K562 (cell line): ENCODE measurements at regions of chr18 and their contacts with region 1.

Region 1: DNA sequence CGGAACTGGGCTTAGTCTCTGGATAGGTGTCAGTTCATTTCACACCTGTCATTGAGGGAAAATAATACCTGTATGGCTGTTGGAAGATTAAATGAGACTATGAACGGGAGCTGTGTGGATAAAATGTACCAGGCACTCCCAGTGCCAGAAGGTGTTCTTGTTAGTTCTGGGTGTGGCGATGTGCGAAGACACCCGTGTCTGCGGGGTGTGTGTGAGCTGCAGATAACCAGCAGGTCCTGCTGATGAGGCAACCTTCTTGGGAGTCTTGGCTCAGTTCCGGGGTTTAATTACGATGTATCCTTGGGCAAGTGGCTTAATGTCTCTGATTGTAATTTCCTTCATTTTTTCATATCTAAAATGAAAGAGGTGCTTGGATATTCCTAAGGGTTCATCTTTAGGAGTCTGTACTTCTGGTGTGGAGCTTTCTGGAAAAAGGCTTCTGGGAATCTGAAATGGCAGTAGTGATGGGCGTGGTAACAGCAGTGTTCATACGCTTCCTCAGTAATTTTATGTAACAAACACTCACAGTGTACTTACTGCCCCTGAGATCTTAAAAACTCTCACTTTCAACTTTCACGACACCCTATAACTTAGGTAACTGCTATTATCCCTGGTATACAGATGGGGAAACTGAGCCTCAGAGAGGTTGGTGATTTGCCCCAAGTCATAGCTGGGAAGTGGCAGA is 35.0 kb downstream of the NEDD4L start:
- DNase-seq: peak; percentile 77 to 86 (median 84)
- ATAC-seq: peak; percentile 93
- H3K4me3 ChIP-seq: no peak overlapping the region
- H3K27ac ChIP-seq: peak overlapping the region; percentile 71
- H3K4me1 ChIP-seq: peaks cover 10 to 21% of the 10 kb centered on the region in 2 experiments; a peak in 3 of 5 replicates
- H3K27me3 ChIP-seq: no peaks in the 10 kb centered on the region
- CTCF ChIP-seq: no peak
- EP300 ChIP-seq: peak; percentile 85
- POLR2A ChIP-seq: no peak
- RAD21 ChIP-seq: no peak

Region 2: DNA sequence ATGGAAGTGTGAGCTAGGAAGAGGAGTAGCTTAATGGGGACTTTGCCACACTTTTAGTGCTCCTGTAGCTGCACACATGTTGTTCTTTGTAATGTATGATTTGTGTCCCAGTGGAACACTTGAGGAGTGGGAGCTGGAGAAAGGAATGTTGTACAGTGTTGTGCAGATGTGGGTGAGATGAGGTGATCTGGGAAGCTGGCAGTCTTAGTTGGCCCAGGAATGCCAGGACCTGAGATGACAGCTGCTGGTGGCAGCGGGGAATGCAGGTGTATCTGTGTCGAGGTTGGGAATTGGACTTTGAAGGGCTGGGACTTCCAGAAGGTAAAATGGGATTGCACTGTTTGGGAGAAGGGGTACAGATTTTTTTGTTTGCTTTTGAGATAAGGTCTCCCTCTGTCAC is 11.4 kb before region 1 on chr18:
- CTCF ChIA-PET with region 1: interaction called, 5 read pairs
- POLR2A ChIA-PET with region 1: interaction called, 10 read pairs
- in situ Hi-C with region 1: no loop called
- intact Hi-C with region 1: no loop called
- DNase-seq: no peak
- ATAC-seq: no peak
- H3K4me3 ChIP-seq: no peak overlapping the region
- H3K27ac ChIP-seq: no peak overlapping the region
- H3K4me1 ChIP-seq: peaks cover 6 to 22% of the 10 kb centered on the region in 2 experiments; a peak in 4 of 5 replicates
- H3K27me3 ChIP-seq: no peaks in the 10 kb centered on the region
- CTCF ChIP-seq: no peak
- EP300 ChIP-seq: no peak
- POLR2A ChIP-seq: no peak
- RAD21 ChIP-seq: no peak

Region 3: DNA sequence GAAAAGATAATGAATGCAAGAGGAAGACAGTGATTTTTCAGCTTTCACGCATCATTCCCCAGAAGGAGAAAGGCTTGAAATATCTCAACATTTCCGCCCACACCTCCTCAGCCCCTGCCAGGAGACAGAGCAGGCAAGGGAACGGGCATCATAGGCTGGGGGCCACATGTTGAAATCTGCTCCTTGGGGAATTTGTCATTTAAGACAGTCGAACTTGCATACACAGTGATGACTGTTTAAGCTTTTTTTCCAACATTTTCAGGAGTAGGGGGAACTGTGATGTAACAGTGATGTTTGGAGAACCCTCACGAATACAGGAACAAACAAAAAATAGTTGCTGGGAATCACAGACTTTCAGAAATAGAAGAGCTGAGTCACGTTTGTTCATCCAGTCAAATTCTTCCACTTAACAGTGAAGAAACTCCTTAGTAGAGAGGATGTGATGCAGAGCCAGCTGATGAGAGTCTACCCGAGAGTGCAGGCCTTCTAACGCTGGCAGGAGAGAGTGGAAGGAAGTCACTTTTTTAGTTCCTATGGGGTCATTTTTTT is 283.1 kb after region 1 on chr18:
- CTCF ChIA-PET with region 1: no interaction called
- POLR2A ChIA-PET with region 1: no interaction called
- in situ Hi-C with region 1: no loop called
- intact Hi-C with region 1: no loop called
- DNase-seq: no peak
- ATAC-seq: no peak
- H3K4me3 ChIP-seq: no peak overlapping the region
- H3K27ac ChIP-seq: no peak overlapping the region
- H3K4me1 ChIP-seq: no peaks in the 10 kb centered on the region
- H3K27me3 ChIP-seq: no peaks in the 10 kb centered on the region
- CTCF ChIP-seq: no peak
- EP300 ChIP-seq: no peak
- POLR2A ChIP-seq: no peak
- RAD21 ChIP-seq: no peak